ENCODE measurements at regions of chr10 and their contacts with region 1.

Region 1: DNA sequence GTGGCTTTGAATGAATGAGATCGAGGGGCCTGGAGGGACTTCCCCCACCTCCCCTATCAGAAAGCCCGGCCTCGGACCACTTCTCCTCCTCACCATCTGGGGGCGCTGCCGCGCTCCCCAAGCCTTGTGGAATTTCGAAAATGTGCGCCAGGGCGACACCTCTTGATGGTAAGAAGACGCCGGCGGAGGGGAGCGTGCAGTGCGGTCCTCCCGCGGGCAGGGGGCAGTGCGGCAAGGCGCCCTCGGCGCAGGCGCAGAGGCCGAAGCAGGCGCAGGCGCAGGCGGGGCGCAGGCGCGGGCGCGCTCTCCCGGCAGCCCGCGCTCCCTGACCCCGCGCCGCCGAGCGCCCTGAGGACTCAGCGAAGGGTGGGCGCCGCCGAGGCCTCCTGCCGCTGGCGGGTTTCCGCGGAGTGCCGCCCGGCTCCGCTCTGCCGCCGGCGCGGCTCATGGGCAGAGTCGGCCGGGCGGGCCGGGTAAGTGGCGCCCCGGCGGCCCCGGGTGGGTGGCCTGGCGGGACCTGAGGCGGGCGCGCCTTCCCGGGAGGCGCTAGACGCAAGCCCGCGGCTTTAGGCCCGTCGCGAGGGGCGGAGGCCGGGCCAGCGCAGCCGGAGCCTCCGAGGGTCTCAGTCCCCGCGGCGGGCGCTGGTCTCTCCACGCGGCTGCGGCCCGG is at the start of gene RBM17:
- DNase-seq: peak; percentile 96 to 99 (median 98)
- ATAC-seq: peak; percentile 96
- H3K4me3 ChIP-seq: peak within 1 kb of the TSS; percentile 76 to 94
- H3K27ac ChIP-seq: peak within 1 kb of the TSS; percentile 81 to 86
- H3K4me1 ChIP-seq: peaks cover 19 to 70% of the 10 kb centered on the region in 2 donors
- H3K27me3 ChIP-seq: no peaks in the 10 kb centered on the region
- CTCF ChIP-seq: peak; percentile 100
- polyA plus RNA-seq, gene RBM17: 176 to 215 (median 191) TPM

Region 2: DNA sequence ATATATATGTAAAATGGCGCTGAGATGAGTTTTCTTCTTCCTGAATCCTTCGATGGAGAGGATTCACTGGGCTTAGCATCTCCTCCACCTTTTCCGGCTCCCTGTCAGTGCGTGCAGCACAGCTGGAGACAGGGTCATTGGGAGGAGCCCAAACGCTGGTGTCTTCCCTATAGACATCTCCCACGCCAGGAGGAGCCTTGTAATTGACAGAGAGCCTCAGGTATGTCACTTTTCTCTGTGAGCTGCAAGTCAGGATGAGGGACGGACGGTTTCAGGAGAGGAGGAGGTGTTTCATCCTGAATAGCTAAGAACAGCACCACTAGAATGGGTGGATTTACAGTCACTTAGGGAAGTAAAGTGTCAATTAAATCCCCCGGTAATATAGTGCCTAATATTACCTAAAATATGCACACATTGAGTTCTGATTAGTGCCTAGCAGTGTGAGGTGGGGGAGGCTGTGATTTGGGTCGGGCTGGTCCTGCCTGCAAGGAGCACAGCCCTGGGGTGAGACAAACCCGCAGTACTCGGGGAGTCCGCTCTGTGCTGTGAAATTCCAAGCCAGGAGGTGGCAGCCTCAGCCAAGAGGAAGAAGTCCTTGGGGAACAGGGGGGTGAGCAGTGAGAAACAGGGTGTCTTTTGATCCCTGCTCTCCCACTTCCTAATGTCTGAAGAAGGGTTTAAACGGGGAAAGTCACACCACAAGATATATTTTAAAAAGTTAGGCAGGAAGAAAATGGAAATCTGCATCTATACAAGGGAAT is 139.7 kb before region 1 on chr10:
- intact Hi-C with region 1: loop called in 1 of 2 experiments (anchors 5 kb)
- DNase-seq: peak in 3 of 4 donors; percentile 68 to 79 (median 73)
- ATAC-seq: peak; percentile 55
- H3K4me3 ChIP-seq: no peak overlapping the region
- H3K27ac ChIP-seq: peak overlapping the region in 1 of 2 donors; percentile 57
- H3K4me1 ChIP-seq: peaks cover 11 to 69% of the 10 kb centered on the region in 2 donors
- H3K27me3 ChIP-seq: no peaks in the 10 kb centered on the region
- CTCF ChIP-seq: peak; percentile 42

Region 3: DNA sequence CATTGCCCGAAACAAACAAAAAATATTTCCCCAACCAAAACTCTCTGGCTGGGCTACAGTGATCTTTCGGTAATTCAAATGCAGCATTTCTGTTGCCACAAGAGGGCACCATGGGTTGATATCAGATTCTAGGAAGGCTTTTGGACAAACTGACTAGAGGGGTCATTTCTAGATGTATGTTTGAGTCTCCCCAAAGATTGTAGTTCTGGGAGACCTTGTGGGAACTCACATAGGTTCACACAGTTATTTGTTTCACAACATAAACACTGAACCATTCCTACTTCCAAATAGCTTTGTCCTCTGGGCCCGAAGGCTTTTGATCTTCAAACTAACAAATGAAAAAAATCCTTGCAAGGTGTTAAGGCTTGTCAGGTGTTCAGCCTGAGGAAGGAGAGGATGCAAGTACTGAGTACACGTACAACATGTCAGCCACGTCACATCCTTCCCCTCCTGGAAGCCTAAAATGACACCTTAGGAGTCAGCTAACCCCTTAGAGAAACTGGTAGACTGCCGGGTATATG is 74.6 kb before region 1 on chr10:
- intact Hi-C with region 1: loop called in 1 of 2 experiments (anchors 5 kb)
- DNase-seq: peak in 2 of 4 donors; percentile 33 to 51
- ATAC-seq: peak; percentile 74
- H3K4me3 ChIP-seq: no peak overlapping the region
- H3K27ac ChIP-seq: peak overlapping the region in 1 of 2 donors; percentile 4
- H3K4me1 ChIP-seq: peaks cover 0 to 6% of the 10 kb centered on the region in 2 donors
- H3K27me3 ChIP-seq: no peaks in the 10 kb centered on the region
- CTCF ChIP-seq: peak; percentile 64 to 68

Measured in left lung (tissue), 14 donors.